Activated CD8-positive, alpha-beta T cell treated with anti-CD3 and anti-CD28 coated beads for 36 hours (primary cell): ENCODE measurements at regions of chr1 and their contacts with region 1.

Region 1: GRCh38 chr1:25487628-25488027 is 55.8 kb upstream of the LDLRAP1 start:
- DNase-seq: peak; percentile 58
- ATAC-seq: no peak
- H3K4me3 Mint-ChIP-seq: no peak overlapping the region
- H3K27ac Mint-ChIP-seq: no peak overlapping the region
- H3K4me1 Mint-ChIP-seq: peaks cover 8% of the 10 kb centered on the region
- H3K27me3 Mint-ChIP-seq: no peaks in the 10 kb centered on the region
- CTCF ChIP-seq: peak; percentile 60

Region 2: GRCh38 chr1:25447547-25447946 is 40.1 kb before region 1 on chr1:
- CTCF ChIA-PET with region 1: interaction called, 11 read pairs
- POLR2A ChIA-PET with region 1: no interaction called
- intact Hi-C with region 1: no loop called
- DNase-seq: peak; percentile 27
- ATAC-seq: peak; percentile 69
- H3K4me3 Mint-ChIP-seq: no peak overlapping the region
- H3K27ac Mint-ChIP-seq: no peak overlapping the region
- H3K4me1 Mint-ChIP-seq: peaks cover 23% of the 10 kb centered on the region
- H3K27me3 Mint-ChIP-seq: no peaks in the 10 kb centered on the region
- CTCF ChIP-seq: no peak

Region 3: GRCh38 chr1:25476186-25477097 is 11.2 kb before region 1 on chr1:
- CTCF ChIA-PET with region 1: interaction called, 77 read pairs
- POLR2A ChIA-PET with region 1: interaction called, 3 read pairs
- intact Hi-C with region 1: no loop called
- DNase-seq: no peak
- ATAC-seq: peak; percentile 64
- H3K4me3 Mint-ChIP-seq: no peak overlapping the region
- H3K27ac Mint-ChIP-seq: peak overlapping the region; percentile 65
- H3K4me1 Mint-ChIP-seq: peaks cover 56% of the 10 kb centered on the region
- H3K27me3 Mint-ChIP-seq: no peaks in the 10 kb centered on the region
- CTCF ChIP-seq: no peak

Region 4: GRCh38 chr1:25503551-25504426 is 16.2 kb after region 1 on chr1:
- CTCF ChIA-PET with region 1: interaction called, 63 read pairs
- POLR2A ChIA-PET with region 1: no interaction called
- intact Hi-C with region 1: no loop called
- DNase-seq: peak; percentile 82
- ATAC-seq: peak; percentile 92
- H3K4me3 Mint-ChIP-seq: no peak overlapping the region
- H3K27ac Mint-ChIP-seq: no peak overlapping the region
- H3K4me1 Mint-ChIP-seq: peaks cover 14% of the 10 kb centered on the region
- H3K27me3 Mint-ChIP-seq: no peaks in the 10 kb centered on the region
- CTCF ChIP-seq: peak; percentile 77

Region 5: DNA sequence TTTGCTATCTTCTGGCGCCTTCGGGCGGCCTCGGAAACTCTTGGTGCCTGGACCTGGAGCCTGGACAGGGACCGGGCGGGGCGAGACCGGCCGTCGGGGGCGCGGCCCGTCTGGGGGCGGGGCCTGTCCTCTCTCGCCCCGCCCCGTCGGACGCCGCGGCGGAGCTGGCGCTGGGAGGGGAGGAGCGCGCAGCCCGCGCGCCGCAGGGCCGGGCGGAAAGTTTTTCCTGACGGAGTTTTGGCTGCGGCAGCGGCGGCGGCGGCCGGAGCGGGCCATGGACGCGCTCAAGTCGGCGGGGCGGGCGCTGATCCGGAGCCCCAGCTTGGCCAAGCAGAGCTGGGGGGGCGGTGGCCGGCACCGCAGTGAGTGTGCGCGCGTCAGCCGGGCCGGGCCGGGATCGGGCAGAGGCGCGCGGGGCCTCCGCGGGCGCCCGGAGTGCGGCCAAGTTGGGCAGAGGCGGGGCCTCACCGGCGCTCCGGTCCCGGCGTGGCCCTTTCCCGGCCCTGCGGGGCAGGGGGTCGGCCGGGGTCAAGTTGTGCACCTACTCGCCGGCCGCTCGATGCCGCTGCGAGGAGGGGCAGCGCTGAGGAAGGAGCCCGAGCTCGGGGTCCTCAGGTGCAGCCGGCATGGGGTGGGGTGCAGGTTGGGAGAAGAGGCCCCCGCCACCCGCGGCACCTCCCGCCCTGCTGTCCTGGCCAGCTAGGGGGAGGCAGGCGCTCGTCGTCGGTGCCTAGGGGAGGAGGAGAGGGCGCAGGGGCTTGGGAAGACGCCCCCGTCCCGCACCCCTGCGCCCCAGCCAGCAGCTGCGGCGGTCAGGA is 56.0 kb after region 1 on chr1 and contains the start of gene LDLRAP1:
- CTCF ChIA-PET with region 1: no interaction called
- POLR2A ChIA-PET with region 1: no interaction called
- intact Hi-C with region 1: no loop called
- DNase-seq: peak; percentile 58
- ATAC-seq: peak; percentile 92
- H3K4me3 Mint-ChIP-seq: peak within 1 kb of the TSS; percentile 82
- H3K27ac Mint-ChIP-seq: peak within 1 kb of the TSS; percentile 75
- H3K4me1 Mint-ChIP-seq: peaks cover 39% of the 10 kb centered on the region
- H3K27me3 Mint-ChIP-seq: no peaks in the 10 kb centered on the region
- CTCF ChIP-seq: no peak
- total RNA-seq, gene LDLRAP1: 13.4 to 14.5 TPM